ENCODE measurements at regions of chr16 and their contacts with region 1.

Region 1: DNA sequence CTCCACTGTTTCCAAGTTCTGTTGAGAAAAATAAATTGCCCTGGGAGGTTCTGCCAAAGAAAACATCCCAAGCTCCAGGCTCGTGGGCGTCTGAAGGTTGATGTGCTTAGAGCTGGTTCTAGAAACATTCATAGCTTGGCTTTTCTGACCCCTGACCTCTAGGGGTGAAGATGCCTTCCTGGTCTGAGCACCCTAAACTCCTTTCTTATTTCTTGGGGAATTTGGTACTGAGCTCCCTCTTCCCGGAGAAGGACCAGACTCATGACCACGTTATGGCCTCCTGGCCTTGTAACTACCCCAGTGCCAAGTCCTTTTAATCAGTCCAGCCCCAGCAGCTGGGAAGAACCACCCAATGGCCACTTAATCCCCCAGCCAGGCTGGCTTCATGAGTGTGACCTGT is 66.4 kb downstream of the MYH11 start:
- DNase-seq: no peak
- H3K4me3 ChIP-seq: no peak overlapping the region
- H3K27ac ChIP-seq: no peak overlapping the region
- H3K4me1 ChIP-seq: no peaks in the 10 kb centered on the region; the same call in 1 of the 2 replicates
- H3K27me3 ChIP-seq: no peaks in the 10 kb centered on the region
- CTCF ChIP-seq: no peak

Region 2: GRCh38 chr16:16105646-16106045 is 315.2 kb after region 1 on chr16:
- CTCF ChIA-PET with region 1: interaction called, 15 read pairs
- POLR2A ChIA-PET with region 1: no interaction called
- intact Hi-C with region 1: no loop called
- DNase-seq: no peak
- H3K4me3 ChIP-seq: no peak overlapping the region
- H3K27ac ChIP-seq: no peak overlapping the region
- H3K4me1 ChIP-seq: no peaks in the 10 kb centered on the region
- H3K27me3 ChIP-seq: no peaks in the 10 kb centered on the region
- CTCF ChIP-seq: no peak

Region 3: GRCh38 chr16:16191493-16192167 is 401.2 kb after region 1 on chr16:
- CTCF ChIA-PET with region 1: interaction called, 11 read pairs
- POLR2A ChIA-PET with region 1: no interaction called
- intact Hi-C with region 1: no loop called
- DNase-seq: no peak
- H3K4me3 ChIP-seq: no peak overlapping the region
- H3K27ac ChIP-seq: no peak overlapping the region
- H3K4me1 ChIP-seq: no peaks in the 10 kb centered on the region
- H3K27me3 ChIP-seq: no peaks in the 10 kb centered on the region; the same call in 1 of the 2 replicates
- CTCF ChIP-seq: no peak

Measured in PC-9 (cell line).